Panc1 (cell line): ENCODE measurements at regions of chr6 and their contacts with region 1.

Region 1: DNA sequence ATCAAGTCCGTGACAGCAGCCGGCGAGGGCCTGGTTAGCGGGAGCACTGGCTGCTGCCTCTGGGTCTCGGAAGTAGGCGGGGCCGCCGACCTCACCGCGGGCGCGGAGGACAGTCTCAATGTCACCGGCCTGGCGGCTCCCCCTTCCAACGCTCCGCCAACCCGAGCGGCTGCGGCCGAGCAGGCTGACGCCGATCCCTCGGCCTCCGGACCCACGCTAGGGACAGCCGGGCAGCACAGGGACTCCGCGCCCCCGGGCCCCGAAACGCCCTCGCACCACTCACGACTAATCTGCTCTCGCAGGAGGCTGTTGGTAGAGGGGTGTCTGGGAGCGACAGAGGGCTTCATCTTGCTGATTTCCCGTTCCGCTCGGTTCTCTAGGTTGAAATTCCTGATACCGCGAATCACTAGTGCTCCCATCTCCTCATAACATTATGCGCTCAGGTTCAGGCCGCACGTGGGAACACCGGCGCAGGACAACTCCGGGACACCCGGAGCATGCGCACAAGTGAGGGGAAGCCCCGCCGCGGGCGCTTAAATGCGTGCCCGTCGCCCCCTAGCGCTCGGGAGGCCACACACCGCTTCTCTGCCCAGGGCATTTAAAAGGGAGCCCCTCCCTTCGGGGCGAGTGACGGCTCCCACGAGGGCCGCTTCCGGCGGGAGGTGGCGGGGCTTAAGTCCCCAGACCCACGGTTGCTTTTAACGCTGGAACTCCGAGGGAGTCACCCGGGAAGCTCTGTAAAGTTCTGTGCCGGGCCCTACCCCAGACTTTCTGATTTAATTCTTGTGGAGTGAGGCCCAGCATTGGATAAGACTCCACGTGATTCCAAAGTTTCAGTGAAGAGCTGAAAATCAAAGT is at the start of gene NDUFAF4:
- DNase-seq: peak; percentile 79
- ATAC-seq: peak; percentile 96
- H3K4me3 ChIP-seq: peak within 1 kb of the TSS; percentile 90 to 92
- H3K27ac ChIP-seq: peak within 1 kb of the TSS; percentile 92
- H3K4me1 ChIP-seq: peaks cover 15% of the 10 kb centered on the region
- H3K27me3 ChIP-seq: no peaks in the 10 kb centered on the region
- CTCF ChIP-seq: peak; percentile 99
- total RNA-seq, gene NDUFAF4: 42.0 TPM

Region 2: DNA sequence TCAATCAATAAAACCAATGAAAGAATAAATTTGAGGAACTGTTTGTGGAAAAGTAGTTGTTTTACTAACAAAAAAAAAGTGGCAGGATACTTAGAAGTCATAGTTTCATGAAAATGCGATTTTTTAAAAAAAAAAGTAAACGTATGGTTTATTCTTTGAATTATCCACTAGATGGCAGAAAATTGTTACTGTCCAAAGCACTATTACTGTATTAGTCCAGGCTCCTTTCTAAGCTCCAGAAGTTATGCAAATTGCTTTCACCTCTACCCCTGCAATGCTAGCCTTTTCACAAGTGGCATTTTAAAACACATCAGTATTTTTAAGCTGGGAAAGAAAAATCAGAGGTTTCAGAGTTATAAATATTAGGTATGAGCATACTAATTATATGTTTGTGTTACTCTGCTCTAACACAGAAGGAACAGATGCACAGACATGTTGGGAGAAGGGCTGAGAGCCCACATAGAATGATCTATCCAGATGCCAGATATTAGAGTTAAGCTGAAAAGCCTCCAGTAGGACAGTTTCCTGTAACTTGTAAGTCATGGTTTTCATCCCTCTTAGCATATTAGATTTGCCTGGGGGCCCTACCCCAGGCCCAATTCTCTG is 270.8 kb before region 1 on chr6:
- CTCF ChIA-PET with region 1: no interaction called
- POLR2A ChIA-PET with region 1: no interaction called
- in situ Hi-C with region 1: no loop called
- intact Hi-C with region 1: loop called (anchors 2 kb)
- DNase-seq: no peak
- ATAC-seq: no peak
- H3K4me3 ChIP-seq: no peak overlapping the region
- H3K27ac ChIP-seq: no peak overlapping the region
- H3K4me1 ChIP-seq: no peaks in the 10 kb centered on the region
- H3K27me3 ChIP-seq: peaks cover 2% of the 10 kb centered on the region; the same call in 1 of the 2 replicates
- CTCF ChIP-seq: peak; percentile 52; the same call in 1 of the 2 replicates

Region 3: DNA sequence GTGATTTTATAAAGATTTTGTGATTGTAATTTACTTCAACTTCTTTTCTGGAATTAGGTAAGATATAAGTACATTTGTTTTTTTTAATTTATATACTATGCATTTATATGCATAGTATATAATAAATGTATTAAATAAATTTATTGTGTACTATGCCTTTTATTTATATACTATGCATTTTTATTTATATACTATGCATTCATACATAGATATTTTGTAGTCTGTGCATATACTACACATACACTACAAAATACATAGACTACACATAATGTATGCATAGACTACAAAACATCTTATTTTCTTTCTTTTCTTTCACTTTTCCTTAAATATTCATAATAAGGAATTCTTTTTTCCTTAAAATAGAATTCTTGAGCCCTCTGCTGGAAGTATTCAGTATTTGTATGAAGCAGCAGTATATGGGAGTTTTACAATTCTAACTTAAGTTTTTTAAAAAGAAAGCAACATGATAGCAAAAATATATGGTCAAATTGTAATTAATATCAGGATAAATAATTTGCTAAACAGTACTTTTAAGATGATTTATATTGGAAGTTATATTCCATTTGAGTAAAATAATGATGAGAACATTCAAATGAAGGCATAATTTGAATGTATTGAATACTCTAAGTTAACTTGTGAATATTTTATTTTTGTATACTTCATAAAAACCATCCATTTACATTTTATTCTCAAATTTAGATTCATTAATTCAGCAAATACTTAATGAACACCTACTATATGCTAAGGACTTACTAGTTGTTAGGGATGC is 156.2 kb after region 1 on chr6:
- CTCF ChIA-PET with region 1: no interaction called
- POLR2A ChIA-PET with region 1: no interaction called
- in situ Hi-C with region 1: no loop called
- intact Hi-C with region 1: loop called (anchors 1 kb)
- DNase-seq: no peak
- ATAC-seq: no peak
- H3K4me3 ChIP-seq: no peak overlapping the region
- H3K27ac ChIP-seq: no peak overlapping the region
- H3K4me1 ChIP-seq: no peaks in the 10 kb centered on the region; the same call in 1 of the 2 replicates
- H3K27me3 ChIP-seq: peaks cover 2% of the 10 kb centered on the region
- CTCF ChIP-seq: no peak